ENCODE measurements at regions of chr12 and their contacts with region 1.

Region 1: GRCh38 chr12:108691175-108691997 is 39.9 kb downstream of the CORO1C start:
- DNase-seq: peak; percentile 77
- H3K4me3 ChIP-seq: peak overlapping the region; percentile 28 to 53
- H3K27ac ChIP-seq: peak overlapping the region; percentile 97 to 99
- H3K4me1 ChIP-seq: peaks cover 43 to 67% of the 10 kb centered on the region in 2 experiments
- H3K27me3 ChIP-seq: no peaks in the 10 kb centered on the region
- CTCF ChIP-seq: peak; percentile 36; the same call in 1 of the 2 replicates
- EP300 ChIP-seq: peak; percentile 77 to 92; a peak in 3 of 4 replicates
- RAD21 ChIP-seq: no peak; the same call in 1 of the 2 replicates

Region 2: GRCh38 chr12:108671110-108671509 is 20.3 kb before region 1 on chr12:
- CTCF ChIA-PET with region 1: interaction called, 20 read pairs
- POLR2A ChIA-PET with region 1: no interaction called
- DNase-seq: no peak
- H3K4me3 ChIP-seq: no peak overlapping the region
- H3K27ac ChIP-seq: no peak overlapping the region
- H3K4me1 ChIP-seq: peaks cover 40 to 41% of the 10 kb centered on the region in 2 experiments
- H3K27me3 ChIP-seq: no peaks in the 10 kb centered on the region
- CTCF ChIP-seq: no peak
- EP300 ChIP-seq: no peak
- RAD21 ChIP-seq: no peak

Region 3: DNA sequence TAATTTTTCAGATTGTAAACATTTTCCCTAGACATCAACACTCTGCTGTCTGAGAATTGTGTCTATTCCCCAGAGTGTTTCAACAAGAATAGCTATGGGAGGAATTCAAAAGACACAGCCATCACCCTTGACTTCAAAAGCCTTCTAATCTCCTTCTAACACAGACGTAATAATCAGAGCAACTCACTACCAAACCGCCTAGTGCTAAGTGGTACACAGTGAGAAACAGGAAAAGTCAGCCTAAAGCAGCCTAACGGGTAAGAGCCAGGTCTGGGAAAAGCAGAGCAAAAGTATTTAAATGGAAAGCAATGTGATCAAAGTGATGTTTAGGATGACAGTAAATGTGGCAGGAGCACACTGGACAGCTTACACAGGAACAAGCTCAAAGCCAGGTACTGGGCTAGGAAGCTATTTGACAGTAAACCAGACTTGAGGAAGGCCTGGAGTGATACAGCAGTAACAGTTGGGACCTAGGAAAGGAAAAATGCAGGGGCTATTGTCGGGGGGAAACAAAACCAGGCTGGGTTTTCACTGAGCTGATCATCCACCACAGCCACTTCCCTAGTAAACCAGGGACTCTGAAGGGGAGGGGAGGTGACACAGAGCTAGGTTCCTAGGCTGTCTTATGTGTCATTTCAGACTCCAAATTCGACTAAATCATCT is 10.5 kb after region 1 on chr12:
- CTCF ChIA-PET with region 1: interaction called, 13 read pairs
- POLR2A ChIA-PET with region 1: interaction called, 4 read pairs
- DNase-seq: no peak
- H3K4me3 ChIP-seq: no peak overlapping the region
- H3K27ac ChIP-seq: peak overlapping the region; percentile 35 to 90
- H3K4me1 ChIP-seq: peaks cover 38 to 50% of the 10 kb centered on the region in 2 experiments; a peak in 3 of 4 replicates
- H3K27me3 ChIP-seq: no peaks in the 10 kb centered on the region
- CTCF ChIP-seq: no peak
- EP300 ChIP-seq: no peak
- RAD21 ChIP-seq: no peak

Region 4: DNA sequence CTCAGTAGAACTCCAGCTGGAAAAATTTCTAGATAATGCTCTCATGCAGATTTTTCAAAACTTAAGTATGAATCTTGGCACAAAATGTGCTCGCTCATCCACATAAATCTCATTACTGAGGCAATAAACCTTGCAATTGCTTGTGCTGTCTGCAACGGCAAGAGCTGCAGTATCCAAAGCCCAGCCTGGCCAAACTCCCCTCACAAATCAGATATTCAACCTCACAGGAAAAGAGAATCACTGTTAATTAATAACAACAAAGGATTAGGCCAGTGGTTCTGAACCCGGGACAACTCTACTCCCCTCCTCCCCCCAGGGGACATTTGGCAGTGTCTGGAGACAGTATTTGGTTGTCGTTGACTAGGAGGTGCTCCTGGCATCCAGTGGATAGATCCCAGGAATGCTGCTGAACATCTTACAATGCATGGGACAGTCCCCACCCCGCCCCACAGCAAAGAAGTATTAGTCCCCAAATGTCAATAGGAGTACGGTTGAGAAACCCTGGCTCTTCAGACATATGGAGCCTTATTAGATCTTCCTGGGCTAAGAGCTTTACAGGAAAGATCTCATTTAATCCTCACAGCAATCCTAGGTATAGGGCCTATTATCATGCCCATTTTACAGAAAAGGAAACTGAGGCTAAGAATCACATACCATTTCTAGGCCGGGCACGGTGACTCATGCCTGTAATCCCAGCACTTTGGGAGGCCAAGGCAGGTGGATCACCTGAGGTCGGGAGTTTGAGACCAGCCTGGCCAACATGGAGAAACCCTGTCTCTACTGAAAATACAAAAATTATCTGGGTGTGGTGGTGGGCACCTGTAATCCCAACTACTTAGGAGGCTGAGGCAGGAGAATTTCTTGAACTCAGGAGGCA is 59.4 kb after region 1 on chr12:
- CTCF ChIA-PET with region 1: no interaction called
- POLR2A ChIA-PET with region 1: no interaction called
- DNase-seq: no peak
- H3K4me3 ChIP-seq: no peak overlapping the region
- H3K27ac ChIP-seq: peak overlapping the region in 1 of 2 experiments; percentile 43; a peak in 2 of 4 replicates
- H3K4me1 ChIP-seq: peaks cover 8 to 11% of the 10 kb centered on the region in 2 experiments; a peak in 2 of 4 replicates
- H3K27me3 ChIP-seq: no peaks in the 10 kb centered on the region
- CTCF ChIP-seq: no peak
- EP300 ChIP-seq: no peak
- RAD21 ChIP-seq: no peak